ENCODE measurements at regions of chr6 and their contacts with region 1.

Region 1: GRCh38 chr6:31834434-31835198 is 7.1 kb downstream of the HSPA1B start:
- DNase-seq: peak; percentile 92
- ATAC-seq: peak; percentile 85
- H3K4me3 ChIP-seq: peak overlapping the region; percentile 75 to 98 (median 93)
- H3K27ac ChIP-seq: peak overlapping the region; percentile 93
- H3K4me1 ChIP-seq: peaks cover 56% of the 10 kb centered on the region
- H3K27me3 ChIP-seq: peaks cover 0 to 2% of the 10 kb centered on the region in 2 experiments; a peak in 1 of 5 replicates
- CTCF ChIP-seq: no peak
- EP300 ChIP-seq: no peak
- POLR2A ChIP-seq: peak; percentile 97 to 99
- RAD21 ChIP-seq: peak; percentile 28; the same call in 1 of the 2 replicates

Region 2: GRCh38 chr6:31665501-31666336 is 168.9 kb before region 1 on chr6 and contains the start of gene CSNK2B:
- CTCF ChIA-PET with region 1: no interaction called
- POLR2A ChIA-PET with region 1: interaction called, 6 read pairs
- in situ Hi-C with region 1: no loop called
- intact Hi-C with region 1: loop called (anchors 5 kb)
- DNase-seq: peak; percentile 99
- ATAC-seq: peak; percentile 83
- H3K4me3 ChIP-seq: peak within 1 kb of the TSS; percentile 93 to 98 (median 94)
- H3K27ac ChIP-seq: peak within 1 kb of the TSS; percentile 99
- H3K4me1 ChIP-seq: peaks cover 71% of the 10 kb centered on the region
- H3K27me3 ChIP-seq: no peaks in the 10 kb centered on the region; a peak in 1 of 5 replicates
- CTCF ChIP-seq: peak; percentile 21
- EP300 ChIP-seq: 0 out of 4 replicates have a peak, but pooled peaks of 1 of the 2 experiments have one; percentile 1
- POLR2A ChIP-seq: peak in 1 of 2 experiments; percentile 98; a peak in 2 of 4 replicates
- RAD21 ChIP-seq: peak; percentile 8; the same call in 1 of the 2 replicates
- total RNA-seq, gene CSNK2B: 296 and 316 TPM in 2 replicates

Region 3: GRCh38 chr6:31776989-31777666 is 57.5 kb before region 1 on chr6 and contains the start of gene VWA7:
- CTCF ChIA-PET with region 1: interaction called, 16 read pairs
- POLR2A ChIA-PET with region 1: interaction called, 53 read pairs
- in situ Hi-C with region 1: loop called (anchors 5 kb)
- intact Hi-C with region 1: loop called (anchors 1 kb)
- DNase-seq: peak; percentile 85
- ATAC-seq: peak; percentile 65
- H3K4me3 ChIP-seq: peak within 1 kb of the TSS; percentile 45 to 72 (median 48)
- H3K27ac ChIP-seq: peak within 1 kb of the TSS; percentile 70
- H3K4me1 ChIP-seq: peaks cover 57% of the 10 kb centered on the region
- H3K27me3 ChIP-seq: no peaks in the 10 kb centered on the region
- CTCF ChIP-seq: peak; percentile 26
- EP300 ChIP-seq: peak in 1 of 2 experiments; percentile 45; a peak in 1 of 4 replicates
- POLR2A ChIP-seq: no peak; a peak in 1 of 4 replicates
- RAD21 ChIP-seq: no peak
- total RNA-seq, gene VWA7: 0.79 and 0.86 TPM in 2 replicates

Region 4: GRCh38 chr6:31815025-31815838 is 19.4 kb before region 1 on chr6 and contains the starts of genes HSPA1A and HSPA1L:
- CTCF ChIA-PET with region 1: no interaction called
- POLR2A ChIA-PET with region 1: interaction called, 27 read pairs
- in situ Hi-C with region 1: no loop called
- intact Hi-C with region 1: no loop called
- DNase-seq: peak; percentile 95
- ATAC-seq: peak; percentile 64
- H3K4me3 ChIP-seq: peak within 1 kb of the TSS; percentile 54 to 71 (median 55)
- H3K27ac ChIP-seq: peak within 1 kb of the TSS; percentile 95
- H3K4me1 ChIP-seq: peaks cover 35% of the 10 kb centered on the region
- H3K27me3 ChIP-seq: no peaks in the 10 kb centered on the region
- CTCF ChIP-seq: no peak
- EP300 ChIP-seq: peak in 1 of 2 experiments; percentile 63; a peak in 2 of 4 replicates
- POLR2A ChIP-seq: peak; percentile 99 to 100
- RAD21 ChIP-seq: peak; percentile 22; the same call in 1 of the 2 replicates
- total RNA-seq, gene HSPA1A: 83.5 and 85.0 TPM in 2 replicates
- total RNA-seq, gene HSPA1L: 0.55 and 0.94 TPM in 2 replicates

Region 5: GRCh38 chr6:31901953-31902643 is 67.5 kb after region 1 on chr6 and contains the start of gene ZBTB12:
- CTCF ChIA-PET with region 1: no interaction called
- POLR2A ChIA-PET with region 1: interaction called, 17 read pairs
- in situ Hi-C with region 1: no loop called
- intact Hi-C with region 1: loop called (anchors 5 kb)
- DNase-seq: peak; percentile 96
- ATAC-seq: peak; percentile 76
- H3K4me3 ChIP-seq: peak within 1 kb of the TSS; percentile 65 to 78 (median 67)
- H3K27ac ChIP-seq: peak within 1 kb of the TSS; percentile 60
- H3K4me1 ChIP-seq: peaks cover 51% of the 10 kb centered on the region
- H3K27me3 ChIP-seq: peaks cover 1 to 13% of the 10 kb centered on the region in 2 experiments; a peak in 2 of 5 replicates
- CTCF ChIP-seq: peak; percentile 48
- EP300 ChIP-seq: peak in 1 of 2 experiments; percentile 30; a peak in 1 of 4 replicates
- POLR2A ChIP-seq: peak; percentile 58 to 78; a peak in 3 of 4 replicates
- RAD21 ChIP-seq: peak; percentile 88
- total RNA-seq, gene ZBTB12: 6.0 and 6.8 TPM in 2 replicates

Region 6: GRCh38 chr6:32597024-32597423 is 762.4 kb after region 1 on chr6:
- CTCF ChIA-PET with region 1: no interaction called
- POLR2A ChIA-PET with region 1: no interaction called
- in situ Hi-C with region 1: no loop called
- intact Hi-C with region 1: no loop called
- DNase-seq: no peak
- ATAC-seq: no peak
- H3K4me3 ChIP-seq: no peak overlapping the region
- H3K27ac ChIP-seq: no peak overlapping the region
- H3K4me1 ChIP-seq: no peaks in the 10 kb centered on the region
- H3K27me3 ChIP-seq: no peaks in the 10 kb centered on the region; a peak in 1 of 5 replicates
- CTCF ChIP-seq: no peak
- EP300 ChIP-seq: no peak
- POLR2A ChIP-seq: no peak
- RAD21 ChIP-seq: no peak

Region 7: GRCh38 chr6:32692019-32692418 is 857.4 kb after region 1 on chr6:
- CTCF ChIA-PET with region 1: no interaction called
- POLR2A ChIA-PET with region 1: no interaction called
- in situ Hi-C with region 1: no loop called
- intact Hi-C with region 1: no loop called
- DNase-seq: peak; percentile 35
- ATAC-seq: peak; percentile 68
- H3K4me3 ChIP-seq: no peak overlapping the region
- H3K27ac ChIP-seq: no peak overlapping the region
- H3K4me1 ChIP-seq: no peaks in the 10 kb centered on the region
- H3K27me3 ChIP-seq: 0 out of 5 replicates have a peak, but pooled peaks cover 0 to 2% of the 10 kb centered on the region in 2 experiments
- CTCF ChIP-seq: peak; percentile 74
- EP300 ChIP-seq: no peak
- POLR2A ChIP-seq: no peak
- RAD21 ChIP-seq: no peak